Posterior vena cava (tissue), 2 donors: ENCODE measurements at regions of chr12 and their contacts with region 1.

Region 1: DNA sequence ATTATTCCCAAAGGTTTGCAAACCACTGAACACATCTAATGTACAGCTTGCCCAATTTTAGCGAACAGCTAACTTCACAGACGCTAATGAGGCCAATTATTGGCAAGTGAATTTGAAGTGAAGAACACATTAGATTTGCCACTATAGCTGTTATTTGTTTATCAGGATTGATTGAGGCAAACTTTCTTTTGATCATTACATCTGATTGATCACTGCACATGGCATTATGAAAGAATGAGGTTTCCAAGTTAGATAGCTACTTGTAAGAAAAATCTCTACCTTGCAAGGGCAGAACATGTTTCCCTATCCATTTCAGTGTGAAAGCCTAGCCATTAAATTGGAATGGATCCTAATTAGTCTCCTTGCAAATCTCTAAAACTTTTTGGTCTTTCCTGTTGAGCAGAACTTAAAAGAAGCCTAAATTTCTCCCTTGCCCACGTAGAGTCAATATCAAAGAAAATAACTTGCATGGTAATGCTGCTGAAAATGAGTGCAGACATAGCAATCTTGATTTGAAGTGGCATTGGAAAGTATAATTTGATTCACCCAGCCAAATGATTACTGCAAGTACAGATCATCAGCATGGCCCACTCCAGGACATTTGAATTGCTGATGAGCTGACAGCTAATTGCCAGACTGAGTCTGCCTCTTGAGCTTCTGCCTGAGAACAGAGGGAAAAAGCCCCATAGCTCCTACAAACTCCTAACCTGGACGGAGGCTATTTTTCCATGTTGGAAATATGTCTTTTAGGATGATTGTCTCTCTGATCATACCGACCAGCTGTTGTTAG is 98.6 kb downstream of the TPH2 start:
- DNase-seq: no peak

Region 2: DNA sequence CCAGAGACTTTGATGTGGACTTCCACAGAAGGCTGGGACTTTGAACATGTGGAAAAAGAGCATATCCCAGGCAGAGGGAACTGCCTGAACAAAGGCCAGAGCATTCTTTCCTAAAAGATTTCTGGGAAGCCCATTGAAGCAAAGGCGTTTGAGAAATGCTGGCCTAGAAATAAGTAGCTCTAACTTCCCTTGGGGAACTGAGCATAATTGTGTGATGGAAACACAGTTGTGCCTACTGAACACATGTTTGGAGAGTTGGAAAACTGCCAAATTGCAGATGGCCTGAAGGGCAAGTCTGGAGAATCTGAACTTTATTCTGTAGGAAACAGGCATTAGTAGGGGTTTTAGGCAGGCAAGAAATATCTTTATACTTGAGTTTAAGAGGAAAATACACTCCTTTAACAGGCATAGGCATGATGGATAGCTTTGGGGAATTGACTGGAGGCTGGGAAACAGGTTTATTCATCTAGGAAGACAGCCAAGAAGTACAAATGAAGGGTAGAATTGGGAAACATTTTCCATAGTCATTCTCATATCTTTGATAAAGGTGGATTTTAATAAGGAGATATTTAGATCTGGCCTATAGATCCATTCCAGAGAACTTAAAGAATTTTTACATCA is 35.5 kb after region 1 on chr12:
- intact Hi-C with region 1: no loop called
- DNase-seq: no peak

Region 3: GRCh38 chr12:72173974-72174373 is 136.8 kb after region 1 on chr12:
- intact Hi-C with region 1: no loop called
- DNase-seq: no peak

Region 4: DNA sequence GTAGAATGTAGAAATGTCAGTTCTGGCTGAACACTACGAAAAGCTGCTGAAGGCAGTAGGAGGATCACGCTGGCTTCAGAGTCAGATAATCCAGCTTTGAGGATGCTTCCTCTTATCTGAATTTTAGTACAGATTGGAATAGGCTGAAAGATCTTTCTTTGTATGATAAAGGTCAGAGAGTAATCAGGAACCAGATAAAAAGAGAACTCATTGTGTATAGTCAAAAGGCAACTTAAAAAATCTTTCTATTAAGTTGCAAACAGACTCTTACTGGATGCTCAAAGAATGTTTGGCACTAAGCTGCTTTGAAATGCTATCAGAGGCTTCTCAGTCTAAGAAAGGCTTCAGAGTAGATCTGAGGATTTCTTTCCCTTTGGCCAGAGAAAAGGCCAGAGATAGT is 213.1 kb after region 1 on chr12:
- intact Hi-C with region 1: loop called in 1 of 2 experiments (anchors 5 kb)
- DNase-seq: no peak